ENCODE measurements at regions of chr9 and their contacts with region 1.

Region 1: GRCh38 chr9:73995836-73996235 is 501.3 kb upstream of the RORB start:
- DNase-seq: no peak
- ATAC-seq: no peak
- H3K4me3 ChIP-seq: no peak overlapping the region
- H3K27ac ChIP-seq: no peak overlapping the region
- H3K4me1 ChIP-seq: no peaks in the 10 kb centered on the region
- H3K27me3 ChIP-seq: no peaks in the 10 kb centered on the region
- CTCF ChIP-seq: no peak
- POLR2A ChIP-seq: no peak
- RAD21 ChIP-seq: no peak

Region 2: GRCh38 chr9:73962792-73963191 is 33.0 kb before region 1 on chr9:
- CTCF ChIA-PET with region 1: no interaction called
- POLR2A ChIA-PET with region 1: no interaction called
- RAD21 ChIA-PET with region 1: no interaction called
- intact Hi-C with region 1: loop called (anchors 2 kb)
- DNase-seq: no peak
- ATAC-seq: no peak
- H3K4me3 ChIP-seq: no peak overlapping the region
- H3K27ac ChIP-seq: no peak overlapping the region
- H3K4me1 ChIP-seq: no peaks in the 10 kb centered on the region
- H3K27me3 ChIP-seq: no peaks in the 10 kb centered on the region
- CTCF ChIP-seq: no peak
- POLR2A ChIP-seq: no peak
- RAD21 ChIP-seq: no peak